Endothelial cell of umbilical vein (primary cell): ENCODE measurements at regions of chr10 and their contacts with region 1.

Region 1: DNA sequence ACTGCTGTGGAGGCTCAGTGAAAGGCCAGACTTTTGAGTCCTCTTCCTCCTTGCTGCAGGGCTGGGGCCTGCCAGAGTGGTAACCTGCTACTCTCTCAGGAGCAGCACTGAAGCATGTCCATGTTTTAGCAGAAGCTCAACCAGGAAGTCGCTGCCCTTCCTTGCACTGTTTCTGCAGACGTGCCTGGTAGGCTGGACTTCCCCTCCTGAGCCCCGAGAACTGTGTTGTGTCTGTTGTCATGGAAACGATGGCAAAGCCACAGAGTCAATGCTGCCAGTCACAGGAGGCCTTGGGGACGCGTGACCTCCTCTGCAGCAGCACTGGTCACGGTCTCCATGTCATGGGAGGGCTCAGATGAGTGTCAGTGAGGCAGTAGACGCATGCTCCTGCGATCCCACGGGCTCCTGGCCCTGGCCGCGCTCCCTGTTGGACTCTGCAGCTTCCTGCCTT is 145.4 kb downstream of the FANK1 start:
- DNase-seq: peak; percentile 98
- H3K4me3 ChIP-seq: no peak overlapping the region
- H3K27ac ChIP-seq: peak overlapping the region; percentile 76
- H3K4me1 ChIP-seq: peaks cover 14% of the 10 kb centered on the region
- H3K27me3 ChIP-seq: no peaks in the 10 kb centered on the region
- CTCF ChIP-seq: no peak
- POLR2A ChIP-seq: no peak

Region 2: GRCh38 chr10:125886914-125887515 is 154.8 kb before region 1 on chr10:
- CTCF ChIA-PET with region 1: no interaction called
- POLR2A ChIA-PET with region 1: no interaction called
- dilution Hi-C with region 1: no loop called
- intact Hi-C with region 1: loop called (anchors 10 kb)
- DNase-seq: no peak
- H3K4me3 ChIP-seq: no peak overlapping the region
- H3K27ac ChIP-seq: no peak overlapping the region
- H3K4me1 ChIP-seq: no peaks in the 10 kb centered on the region
- H3K27me3 ChIP-seq: no peaks in the 10 kb centered on the region
- CTCF ChIP-seq: no peak
- POLR2A ChIP-seq: no peak

Region 3: GRCh38 chr10:126097558-126098225 is 55.9 kb after region 1 on chr10:
- CTCF ChIA-PET with region 1: interaction called, 4 read pairs
- POLR2A ChIA-PET with region 1: no interaction called
- dilution Hi-C with region 1: no loop called
- intact Hi-C with region 1: loop called (anchors 2 kb)
- DNase-seq: no peak
- H3K4me3 ChIP-seq: no peak overlapping the region
- H3K27ac ChIP-seq: no peak overlapping the region
- H3K4me1 ChIP-seq: peaks cover 8% of the 10 kb centered on the region
- H3K27me3 ChIP-seq: peaks cover 0 to 2% of the 10 kb centered on the region in 2 experiments
- CTCF ChIP-seq: peak; percentile 20 to 38
- POLR2A ChIP-seq: no peak

Region 4: DNA sequence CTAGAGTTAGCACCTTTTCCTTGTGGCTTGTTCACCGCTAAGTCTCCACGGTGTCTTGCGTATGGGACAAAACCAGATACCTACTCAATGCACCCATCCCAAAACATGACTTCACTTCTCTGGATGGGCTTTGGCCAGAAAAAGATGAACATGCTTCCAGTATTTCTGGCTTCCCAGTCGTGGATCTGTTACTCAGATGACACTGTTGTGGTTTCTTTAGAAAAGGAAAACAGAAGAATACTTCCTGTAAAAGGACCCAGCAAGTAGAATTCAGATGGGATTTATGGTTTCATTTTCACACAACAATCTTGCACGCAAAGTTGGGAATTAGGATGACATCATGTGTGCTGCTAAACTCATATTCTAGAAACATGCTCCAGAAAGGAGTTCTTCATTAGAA is 129.7 kb after region 1 on chr10:
- CTCF ChIA-PET with region 1: no interaction called
- POLR2A ChIA-PET with region 1: no interaction called
- dilution Hi-C with region 1: no loop called
- intact Hi-C with region 1: no loop called
- DNase-seq: no peak
- H3K4me3 ChIP-seq: no peak overlapping the region
- H3K27ac ChIP-seq: no peak overlapping the region
- H3K4me1 ChIP-seq: no peaks in the 10 kb centered on the region
- H3K27me3 ChIP-seq: no peaks in the 10 kb centered on the region
- CTCF ChIP-seq: no peak
- POLR2A ChIP-seq: no peak